Calu3 (cell line): ENCODE measurements at regions of chr19 and their contacts with region 1.

Region 1: GRCh38 chr19:48965040-48965805 is at the start of gene FTL:
- DNase-seq: peak; percentile 97
- H3K4me3 Mint-ChIP-seq: peak within 1 kb of the TSS; percentile 98
- H3K27ac Mint-ChIP-seq: peak within 1 kb of the TSS; percentile 99
- H3K4me1 Mint-ChIP-seq: peaks cover 50% of the 10 kb centered on the region
- H3K27me3 Mint-ChIP-seq: no peaks in the 10 kb centered on the region
- CTCF ChIP-seq: no peak
- total RNA-seq, gene FTL: 1,459 and 1,979 TPM in 2 replicates

Region 2: DNA sequence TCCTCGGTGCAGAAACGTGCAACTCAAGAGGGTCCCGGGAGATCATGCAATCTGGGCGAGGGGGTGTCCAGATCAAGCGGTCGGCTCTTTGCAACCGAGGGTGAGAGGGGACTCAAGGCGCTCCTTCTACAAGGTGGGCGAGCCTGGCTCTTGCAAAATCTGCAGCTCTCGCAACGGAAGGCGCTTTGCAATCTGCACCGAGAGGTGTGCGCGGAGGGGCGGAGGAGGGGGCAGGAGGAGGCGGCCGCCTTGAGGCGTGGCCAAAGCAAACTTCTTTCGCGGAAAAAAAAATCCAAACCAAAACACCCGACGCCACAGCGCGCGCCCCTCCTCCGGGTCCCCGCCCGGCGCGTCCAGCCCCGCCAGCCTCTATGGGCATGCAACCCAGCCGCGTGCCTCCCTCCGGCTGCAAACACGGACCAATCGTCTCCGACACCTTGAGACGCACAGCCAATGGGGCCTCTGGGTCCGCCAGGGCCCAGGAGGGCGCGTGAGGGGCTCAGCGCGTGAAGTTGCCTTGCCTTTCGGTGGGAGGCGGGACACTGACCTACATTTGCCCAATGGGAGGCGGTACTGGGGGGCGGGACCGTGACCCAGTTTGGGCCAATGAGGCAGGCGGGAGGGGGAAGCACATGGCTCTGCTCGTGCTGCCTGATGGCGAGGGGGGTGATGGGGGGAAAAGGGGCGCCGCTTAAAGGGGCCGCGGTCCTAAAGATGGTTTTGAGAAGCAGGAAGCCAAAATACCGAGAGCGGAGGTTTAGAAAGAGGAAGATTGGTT is 327.9 kb before region 1 on chr19 and contains the start of gene DBP:
- CTCF ChIA-PET with region 1: no interaction called
- intact Hi-C with region 1: loop called (anchors 5 kb)
- DNase-seq: peak; percentile 99
- H3K4me3 Mint-ChIP-seq: peak within 1 kb of the TSS; percentile 70
- H3K27ac Mint-ChIP-seq: peak within 1 kb of the TSS; percentile 80
- H3K4me1 Mint-ChIP-seq: peaks cover 35% of the 10 kb centered on the region
- H3K27me3 Mint-ChIP-seq: peaks cover 45% of the 10 kb centered on the region
- CTCF ChIP-seq: no peak
- total RNA-seq, gene DBP: 4.3 and 4.9 TPM in 2 replicates

Region 3: DNA sequence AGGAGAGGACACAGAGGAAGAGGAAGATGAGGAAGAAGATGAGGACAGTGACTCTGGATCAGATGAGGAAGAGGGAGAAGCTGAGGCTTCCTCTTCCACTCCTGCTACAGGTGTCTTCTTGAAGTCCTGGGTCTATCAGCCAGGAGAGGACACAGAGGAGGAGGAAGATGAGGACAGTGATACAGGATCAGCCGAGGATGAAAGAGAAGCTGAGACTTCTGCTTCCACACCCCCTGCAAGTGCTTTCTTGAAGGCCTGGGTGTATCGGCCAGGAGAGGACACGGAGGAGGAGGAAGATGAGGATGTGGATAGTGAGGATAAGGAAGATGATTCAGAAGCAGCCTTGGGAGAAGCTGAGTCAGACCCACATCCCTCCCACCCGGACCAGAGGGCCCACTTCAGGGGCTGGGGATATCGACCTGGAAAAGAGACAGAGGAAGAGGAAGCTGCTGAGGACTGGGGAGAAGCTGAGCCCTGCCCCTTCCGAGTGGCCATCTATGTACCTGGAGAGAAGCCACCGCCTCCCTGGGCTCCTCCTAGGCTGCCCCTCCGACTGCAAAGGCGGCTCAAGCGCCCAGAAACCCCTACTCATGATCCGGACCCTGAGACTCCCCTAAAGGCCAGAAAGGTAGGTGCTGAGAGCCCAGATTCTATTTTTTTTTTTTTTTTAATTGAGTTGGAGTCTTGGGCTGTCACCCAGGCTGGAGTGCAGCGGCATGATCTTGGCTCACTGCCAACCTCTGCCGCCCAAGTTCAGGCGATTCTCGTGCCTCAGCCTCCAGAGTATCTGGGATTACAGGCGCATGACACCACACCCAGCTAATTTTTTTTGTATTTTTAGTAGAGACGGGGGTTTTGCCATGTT is 90.7 kb before region 1 on chr19:
- CTCF ChIA-PET with region 1: interaction called, 5 read pairs
- intact Hi-C with region 1: loop called (anchors 2 kb)
- DNase-seq: no peak
- H3K4me3 Mint-ChIP-seq: peak overlapping the region; percentile 95
- H3K27ac Mint-ChIP-seq: peak overlapping the region; percentile 100
- H3K4me1 Mint-ChIP-seq: peaks cover 33% of the 10 kb centered on the region
- H3K27me3 Mint-ChIP-seq: peaks cover 8% of the 10 kb centered on the region
- CTCF ChIP-seq: no peak

Region 4: DNA sequence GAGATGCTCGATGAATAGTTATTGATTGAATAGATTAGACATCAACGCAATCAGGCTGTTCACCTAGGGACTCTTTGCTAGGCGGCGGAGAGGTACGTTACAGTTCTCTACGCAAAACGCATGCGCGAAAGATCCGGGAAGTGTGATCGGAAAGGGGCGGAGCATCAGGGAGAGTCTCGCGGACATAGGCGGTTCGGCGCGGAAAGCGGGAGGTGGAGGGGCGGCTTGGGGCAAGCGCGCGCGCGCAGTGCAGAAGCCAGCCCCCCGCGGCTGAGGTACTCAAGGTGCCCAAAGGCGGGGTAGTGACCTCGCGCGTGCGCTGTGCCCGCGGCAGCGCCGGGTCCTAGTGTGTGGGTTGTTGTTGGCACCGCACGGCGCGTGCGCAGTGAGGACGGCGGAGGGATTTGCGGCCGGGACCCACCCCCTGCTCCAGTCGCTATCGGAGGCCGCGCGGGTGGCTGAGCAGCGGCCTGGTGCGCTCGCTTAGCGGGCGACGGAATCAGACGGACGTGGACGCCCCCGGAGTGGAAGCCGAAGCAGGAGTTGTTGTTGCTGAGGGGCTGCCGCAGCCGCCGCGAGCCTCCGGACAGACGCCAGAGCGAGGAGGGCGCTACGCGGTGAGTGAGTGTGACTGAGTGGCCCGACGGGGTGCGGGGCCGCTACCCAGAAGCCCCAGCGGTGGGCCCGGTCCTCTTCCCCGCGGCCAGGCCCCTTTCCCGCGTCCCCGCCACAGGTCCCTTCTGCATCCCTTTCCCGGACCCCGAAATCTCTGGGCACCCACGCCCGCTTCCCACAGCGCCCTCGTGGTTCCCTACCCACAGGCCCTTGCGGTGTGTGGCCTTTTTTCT is 120.0 kb after region 1 on chr19 and contains the start of gene SNRNP70:
- CTCF ChIA-PET with region 1: no interaction called
- intact Hi-C with region 1: no loop called
- DNase-seq: peak; percentile 100
- H3K4me3 Mint-ChIP-seq: peak within 1 kb of the TSS; percentile 92
- H3K27ac Mint-ChIP-seq: peak within 1 kb of the TSS; percentile 93
- H3K4me1 Mint-ChIP-seq: peaks cover 30% of the 10 kb centered on the region
- H3K27me3 Mint-ChIP-seq: no peaks in the 10 kb centered on the region
- CTCF ChIP-seq: no peak
- total RNA-seq, gene SNRNP70: 310 and 325 TPM in 2 replicates